ENCODE measurements at regions of chr1 and their contacts with region 1.

Region 1: DNA sequence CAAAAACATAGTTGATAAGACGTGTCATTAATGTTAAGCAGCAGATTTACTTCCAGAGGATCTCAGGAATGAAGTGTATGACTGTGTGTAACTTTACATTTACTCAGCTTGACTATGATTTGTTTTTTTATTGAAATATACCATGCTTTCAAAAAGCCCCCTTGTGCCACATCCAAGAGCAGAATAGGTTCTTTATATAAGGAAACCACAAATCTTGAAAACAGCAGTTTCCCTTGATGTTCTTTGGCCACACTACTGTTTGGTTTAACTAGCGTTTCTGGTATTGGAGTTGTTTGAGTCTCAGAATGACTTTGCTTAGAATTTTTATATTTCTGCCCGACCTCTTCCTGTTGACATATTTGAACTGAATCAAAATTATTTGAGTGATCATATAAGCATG is 25.0 kb downstream of the LRRC8C start:
- DNase-seq: peak; percentile 24
- H3K4me3 Mint-ChIP-seq: peak overlapping the region; percentile 62
- H3K27ac Mint-ChIP-seq: peak overlapping the region; percentile 72
- H3K4me1 Mint-ChIP-seq: peaks cover 91% of the 10 kb centered on the region
- H3K27me3 Mint-ChIP-seq: no peaks in the 10 kb centered on the region

Region 2: DNA sequence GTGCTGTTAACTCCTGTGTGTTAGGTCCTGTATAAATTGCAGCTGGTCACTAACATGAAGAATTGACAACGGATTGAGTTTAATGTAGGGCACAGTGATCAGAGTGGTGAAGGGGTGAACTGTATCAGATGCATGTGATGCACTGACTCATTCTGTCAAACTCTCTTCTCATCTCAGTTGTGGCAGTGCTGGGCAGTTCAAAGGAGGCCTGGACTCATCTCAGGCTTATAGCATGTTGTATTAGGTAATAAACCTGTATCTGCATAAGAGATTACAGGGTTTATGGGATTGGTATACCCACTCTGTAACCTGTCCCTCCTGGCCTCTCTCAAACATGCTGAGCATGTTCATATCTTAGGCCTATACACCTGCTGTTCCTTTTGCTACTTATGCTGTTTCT is 622.8 kb before region 1 on chr1:
- intact Hi-C with region 1: no loop called
- DNase-seq: no peak
- H3K4me3 Mint-ChIP-seq: no peak overlapping the region
- H3K27ac Mint-ChIP-seq: no peak overlapping the region
- H3K4me1 Mint-ChIP-seq: peaks cover 39% of the 10 kb centered on the region
- H3K27me3 Mint-ChIP-seq: peaks cover 3% of the 10 kb centered on the region

Region 3: DNA sequence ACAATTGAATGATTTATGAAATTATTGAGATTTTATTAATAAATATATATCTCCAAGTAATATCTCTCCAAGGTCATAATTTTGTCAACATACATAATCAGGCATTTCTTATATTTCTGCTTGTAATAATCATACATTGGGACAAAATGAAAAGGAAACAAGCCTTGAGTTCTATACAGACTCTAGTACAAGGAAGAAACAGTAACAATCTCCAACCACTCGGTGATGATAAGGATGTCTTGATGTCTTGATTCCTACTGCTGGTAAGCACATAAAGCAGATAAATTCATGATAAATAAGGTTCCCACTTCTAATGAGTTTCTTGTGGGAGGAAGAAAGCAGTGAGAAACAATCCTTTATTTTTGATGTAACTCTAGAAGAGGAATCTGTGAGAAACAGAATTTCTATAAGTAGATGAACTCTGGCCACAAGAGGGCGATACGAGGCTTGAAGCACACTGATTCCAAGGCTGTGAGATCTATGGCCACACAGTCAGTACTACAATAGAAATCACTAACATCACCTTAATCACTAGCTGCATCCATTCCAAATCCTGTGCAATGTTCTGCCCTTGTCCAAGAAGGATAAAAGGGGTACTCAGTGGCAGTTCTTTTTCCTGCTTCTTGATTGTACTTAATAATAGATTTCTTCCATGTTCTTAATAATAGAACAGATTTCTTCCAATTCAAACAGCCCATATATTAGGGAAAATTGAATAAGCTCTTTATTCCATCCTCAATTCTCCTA is 174.7 kb before region 1 on chr1:
- intact Hi-C with region 1: no loop called
- DNase-seq: peak; percentile 58
- H3K4me3 Mint-ChIP-seq: no peak overlapping the region
- H3K27ac Mint-ChIP-seq: no peak overlapping the region
- H3K4me1 Mint-ChIP-seq: peaks cover 25% of the 10 kb centered on the region
- H3K27me3 Mint-ChIP-seq: peaks cover 2% of the 10 kb centered on the region

Region 4: GRCh38 chr1:89670163-89670562 is 12.3 kb after region 1 on chr1:
- intact Hi-C with region 1: loop called (anchors 1 kb)
- DNase-seq: no peak
- H3K4me3 Mint-ChIP-seq: peak overlapping the region; percentile 32
- H3K27ac Mint-ChIP-seq: peak overlapping the region; percentile 79
- H3K4me1 Mint-ChIP-seq: peaks cover 86% of the 10 kb centered on the region
- H3K27me3 Mint-ChIP-seq: no peaks in the 10 kb centered on the region

Region 5: GRCh38 chr1:89692601-89693521 is 35.0 kb after region 1 on chr1:
- intact Hi-C with region 1: loop called (anchors 2 kb)
- DNase-seq: no peak
- H3K4me3 Mint-ChIP-seq: no peak overlapping the region
- H3K27ac Mint-ChIP-seq: peak overlapping the region; percentile 70
- H3K4me1 Mint-ChIP-seq: peaks cover 80% of the 10 kb centered on the region
- H3K27me3 Mint-ChIP-seq: no peaks in the 10 kb centered on the region

Region 6: GRCh38 chr1:89762779-89763648 is 105.1 kb after region 1 on chr1:
- intact Hi-C with region 1: loop called (anchors 1 kb)
- DNase-seq: peak; percentile 78
- H3K4me3 Mint-ChIP-seq: peak overlapping the region; percentile 92
- H3K27ac Mint-ChIP-seq: peak overlapping the region; percentile 93
- H3K4me1 Mint-ChIP-seq: peaks cover 63% of the 10 kb centered on the region
- H3K27me3 Mint-ChIP-seq: no peaks in the 10 kb centered on the region

Region 7: GRCh38 chr1:90544356-90544755 is 886.5 kb after region 1 on chr1:
- intact Hi-C with region 1: no loop called
- DNase-seq: no peak
- H3K4me3 Mint-ChIP-seq: no peak overlapping the region
- H3K27ac Mint-ChIP-seq: no peak overlapping the region
- H3K4me1 Mint-ChIP-seq: no peaks in the 10 kb centered on the region
- H3K27me3 Mint-ChIP-seq: peaks cover 4% of the 10 kb centered on the region